ENCODE measurements at regions of chr17 and their contacts with region 1.

Region 1: GRCh38 chr17:8222630-8223356 is 12.4 kb upstream of the AURKB start:
- DNase-seq: peak; percentile 96
- H3K4me3 Mint-ChIP-seq: peak overlapping the region; percentile 98
- H3K27ac Mint-ChIP-seq: peak overlapping the region; percentile 93
- H3K4me1 Mint-ChIP-seq: peaks cover 60% of the 10 kb centered on the region
- H3K27me3 Mint-ChIP-seq: peaks cover 7% of the 10 kb centered on the region

Region 2: DNA sequence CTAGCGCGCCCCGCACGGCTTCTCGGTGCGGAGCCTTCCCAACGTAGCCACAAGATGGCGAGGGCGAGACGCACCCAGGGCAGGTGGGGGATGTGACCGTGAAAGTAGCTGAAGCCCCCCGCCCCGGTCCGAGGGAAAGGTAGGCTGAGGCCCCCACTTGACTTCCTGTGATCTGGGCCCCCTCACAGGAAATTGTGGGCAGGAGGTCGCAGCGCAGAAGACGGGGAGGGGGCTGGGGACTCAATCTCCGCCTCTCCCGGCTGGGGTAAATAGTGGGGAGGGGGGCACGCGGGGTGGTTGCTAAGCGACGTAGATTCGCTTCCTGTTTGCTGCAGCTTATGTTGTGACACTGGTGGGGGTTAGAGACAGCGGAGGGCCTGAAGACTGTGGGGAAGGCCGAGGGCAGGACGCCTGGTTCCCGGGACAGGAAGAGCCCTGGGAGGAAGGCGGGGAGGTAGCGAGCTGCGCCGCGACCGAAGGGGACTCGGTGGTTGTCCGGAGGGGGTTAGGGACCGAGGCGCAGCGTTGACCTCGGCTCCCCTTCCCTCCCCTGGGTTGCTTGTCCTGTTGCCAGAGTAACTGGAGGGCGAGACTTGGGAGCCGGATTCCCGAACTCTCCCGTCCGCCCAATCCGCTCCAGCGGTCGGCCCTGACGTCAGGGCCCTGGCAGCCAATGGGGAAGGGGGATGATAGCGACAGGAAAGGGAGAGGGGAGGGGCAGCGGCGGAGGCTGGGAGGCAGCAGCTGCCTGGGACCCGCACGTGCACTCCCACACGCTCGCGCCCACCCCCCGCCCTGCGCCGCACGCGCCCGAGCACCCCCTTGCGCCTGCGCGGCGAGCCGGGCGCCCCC is 387.6 kb before region 1 on chr17:
- intact Hi-C with region 1: no loop called
- DNase-seq: peak; percentile 94
- H3K4me3 Mint-ChIP-seq: peak overlapping the region; percentile 87
- H3K27ac Mint-ChIP-seq: peak overlapping the region; percentile 95
- H3K4me1 Mint-ChIP-seq: peaks cover 50% of the 10 kb centered on the region
- H3K27me3 Mint-ChIP-seq: peaks cover 17% of the 10 kb centered on the region

Region 3: GRCh38 chr17:8173056-8173870 is 49.5 kb before region 1 on chr17:
- intact Hi-C with region 1: loop called (anchors 1 kb)
- DNase-seq: peak; percentile 93
- H3K4me3 Mint-ChIP-seq: peak overlapping the region; percentile 98
- H3K27ac Mint-ChIP-seq: peak overlapping the region; percentile 99
- H3K4me1 Mint-ChIP-seq: peaks cover 38% of the 10 kb centered on the region
- H3K27me3 Mint-ChIP-seq: no peaks in the 10 kb centered on the region

Region 4: GRCh38 chr17:8209909-8210760 is 12.7 kb before region 1 on chr17 and contains the start of gene AURKB:
- intact Hi-C with region 1: loop called (anchors 1 kb)
- DNase-seq: peak; percentile 98
- H3K4me3 Mint-ChIP-seq: peak within 1 kb of the TSS; percentile 98
- H3K27ac Mint-ChIP-seq: peak within 1 kb of the TSS; percentile 98
- H3K4me1 Mint-ChIP-seq: peaks cover 27% of the 10 kb centered on the region
- H3K27me3 Mint-ChIP-seq: no peaks in the 10 kb centered on the region
- total RNA-seq, gene AURKB: 92.3 and 101 TPM in 2 replicates

Region 5: DNA sequence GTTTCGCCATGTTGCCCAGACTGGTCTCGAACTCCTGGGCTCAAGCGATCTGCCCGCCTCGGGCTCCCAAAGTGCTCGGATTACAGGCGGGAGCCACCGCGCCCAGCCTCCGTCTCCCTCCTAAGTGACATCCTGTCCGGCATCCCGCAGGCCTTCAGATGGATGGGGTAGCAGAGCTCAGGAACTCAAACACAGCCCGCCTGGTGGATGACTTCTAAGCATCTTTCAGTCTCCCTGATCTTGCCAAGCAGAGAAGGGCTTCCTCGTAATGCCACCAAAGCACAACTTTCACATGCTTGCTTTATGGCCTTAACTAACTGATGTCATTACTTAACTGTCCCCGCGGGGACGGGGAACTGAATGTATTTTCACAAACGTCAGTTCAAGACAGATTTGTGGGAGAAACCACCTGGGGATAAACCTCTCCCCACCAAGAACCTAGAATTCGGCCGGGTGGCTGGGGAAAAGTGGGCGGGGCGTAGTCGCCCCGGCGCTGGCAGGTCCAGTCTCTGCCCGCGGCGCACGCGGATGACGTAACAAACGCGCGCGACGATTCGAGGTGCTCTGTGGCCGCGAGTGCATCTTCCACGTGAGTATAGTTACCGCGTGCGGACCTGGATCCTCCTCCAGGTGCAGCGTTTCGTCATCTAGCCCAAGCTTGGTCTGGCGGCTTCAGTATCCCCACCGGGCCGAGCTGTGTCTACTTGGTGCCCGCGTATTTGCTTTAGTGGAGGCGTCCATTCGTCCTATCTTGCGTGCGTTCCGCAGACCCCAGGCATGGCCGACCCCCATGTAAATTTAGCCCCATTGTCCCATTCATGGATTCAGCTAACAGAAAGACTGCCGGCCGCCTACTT is 26.2 kb after region 1 on chr17 and contains the start of gene PFAS:
- intact Hi-C with region 1: loop called (anchors 1 kb)
- DNase-seq: peak; percentile 99
- H3K4me3 Mint-ChIP-seq: peak within 1 kb of the TSS; percentile 92
- H3K27ac Mint-ChIP-seq: peak within 1 kb of the TSS; percentile 99
- H3K4me1 Mint-ChIP-seq: peaks cover 36% of the 10 kb centered on the region
- H3K27me3 Mint-ChIP-seq: no peaks in the 10 kb centered on the region
- total RNA-seq, gene PFAS: 208 and 211 TPM in 2 replicates

Region 6: DNA sequence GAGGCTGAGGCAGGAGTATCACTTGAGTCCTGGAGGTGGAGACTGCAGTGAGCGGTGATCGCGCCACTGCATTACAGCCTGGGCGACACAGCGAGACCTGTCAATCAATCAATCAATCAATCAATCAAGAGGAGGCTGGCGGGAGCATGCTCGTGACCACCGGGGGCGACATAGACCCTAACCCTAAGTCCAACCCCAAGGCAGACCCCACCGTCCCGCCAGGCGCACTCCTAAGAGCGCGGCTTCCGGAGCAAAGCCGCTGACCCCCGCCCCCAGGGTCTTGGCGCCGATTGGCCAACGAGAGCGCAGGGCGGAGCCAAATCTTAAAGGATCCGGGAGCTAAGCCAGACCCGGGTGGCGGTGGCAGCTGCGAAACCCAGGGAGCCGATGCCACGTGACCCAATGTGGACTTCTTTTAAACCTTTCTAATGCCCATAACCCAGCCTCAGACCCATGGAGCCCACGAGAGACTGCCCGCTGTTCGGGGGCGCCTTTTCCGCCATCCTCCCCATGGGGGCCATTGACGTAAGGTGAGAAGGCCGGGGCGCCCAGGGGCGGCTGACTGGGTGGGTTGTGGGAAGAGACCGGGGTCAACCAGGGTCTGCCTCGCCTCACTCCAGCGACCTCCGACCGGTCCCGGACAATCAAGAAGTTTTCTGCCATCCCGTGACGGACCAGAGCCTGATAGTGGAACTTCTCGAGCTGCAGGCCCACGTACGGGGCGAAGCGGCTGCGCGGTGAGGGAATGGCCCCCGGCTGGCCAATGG is 65.7 kb after region 1 on chr17 and contains the start of gene RANGRF:
- intact Hi-C with region 1: loop called (anchors 2 kb)
- DNase-seq: peak; percentile 97
- H3K4me3 Mint-ChIP-seq: peak within 1 kb of the TSS; percentile 99
- H3K27ac Mint-ChIP-seq: peak within 1 kb of the TSS; percentile 96
- H3K4me1 Mint-ChIP-seq: peaks cover 37% of the 10 kb centered on the region
- H3K27me3 Mint-ChIP-seq: no peaks in the 10 kb centered on the region
- total RNA-seq, gene RANGRF: 57.5 and 66.3 TPM in 2 replicates

Region 7: DNA sequence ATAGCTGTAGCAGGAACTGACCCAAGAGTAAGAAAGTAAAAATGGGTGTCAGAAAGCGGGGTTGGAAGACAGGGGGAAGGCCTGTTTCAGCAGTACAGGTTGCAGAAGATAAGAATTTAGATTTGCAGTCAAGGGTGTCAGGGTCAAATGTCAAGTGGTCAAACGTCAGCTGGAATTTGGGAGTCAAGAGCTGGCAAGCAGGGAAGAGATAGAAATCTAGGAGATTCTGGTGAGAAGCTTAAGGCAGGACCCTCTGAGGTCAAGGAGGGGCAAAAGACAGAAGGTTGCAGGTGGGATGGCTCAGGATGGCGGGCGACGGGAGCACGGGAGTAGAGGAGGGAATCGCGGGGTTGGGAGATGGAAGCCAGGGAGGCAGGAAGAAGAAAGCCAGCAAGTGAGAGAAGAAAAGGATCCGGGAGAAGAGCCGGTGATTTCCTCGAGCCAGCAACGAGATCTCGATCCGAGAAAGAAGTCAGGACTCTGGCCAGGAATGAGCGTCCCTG is 72.1 kb after region 1 on chr17:
- intact Hi-C with region 1: loop called (anchors 2 kb)
- DNase-seq: no peak
- H3K4me3 Mint-ChIP-seq: peak overlapping the region; percentile 83
- H3K27ac Mint-ChIP-seq: peak overlapping the region; percentile 90
- H3K4me1 Mint-ChIP-seq: peaks cover 34% of the 10 kb centered on the region
- H3K27me3 Mint-ChIP-seq: no peaks in the 10 kb centered on the region

Region 8: DNA sequence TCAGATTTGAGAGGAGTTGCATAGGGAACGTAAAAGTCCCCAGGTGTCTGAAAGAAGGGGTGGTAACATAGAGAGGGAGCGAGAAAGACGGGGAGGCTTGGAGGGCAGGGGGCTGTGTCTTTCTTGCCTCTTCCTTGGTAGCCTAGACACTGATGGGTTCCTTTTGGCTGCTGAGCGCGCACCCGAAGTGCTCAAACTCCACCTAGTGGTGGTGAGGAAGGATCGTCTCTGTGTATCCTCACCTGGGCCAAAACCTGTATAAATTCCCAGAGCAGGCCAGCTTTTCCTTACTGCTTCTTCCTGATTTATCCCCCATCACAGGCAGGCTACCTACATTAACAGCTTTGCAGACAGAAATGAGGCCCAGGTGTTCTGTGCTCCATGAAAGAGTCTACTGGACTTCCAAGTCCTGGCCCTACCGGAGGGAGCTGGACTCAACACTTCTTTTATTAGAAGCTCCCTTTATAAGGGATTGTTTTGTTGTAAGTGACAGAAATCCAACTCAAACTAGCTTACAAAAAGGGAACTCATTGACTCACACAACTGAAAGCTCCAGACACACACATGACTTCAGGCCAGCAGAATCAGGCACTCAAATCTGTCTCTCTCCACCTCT is 77.9 kb after region 1 on chr17:
- intact Hi-C with region 1: loop called (anchors 2 kb)
- DNase-seq: peak; percentile 87
- H3K4me3 Mint-ChIP-seq: no peak overlapping the region
- H3K27ac Mint-ChIP-seq: no peak overlapping the region
- H3K4me1 Mint-ChIP-seq: peaks cover 8% of the 10 kb centered on the region
- H3K27me3 Mint-ChIP-seq: no peaks in the 10 kb centered on the region

Measured in activated CD4-positive, alpha-beta T cell treated with anti-CD3 and anti-CD28 coated beads, Interleukin-2, amount 10 ng/mL, durations not matched to agents 24 days and 14 days (primary cell).